PC-3 (cell line): ENCODE measurements at regions of chr4 and their contacts with region 1.

Region 1: GRCh38 chr4:177546745-177547144 is 104.5 kb upstream of the AGA start:
- DNase-seq: peak; percentile 21
- ATAC-seq: no peak
- H3K4me3 ChIP-seq: no peak overlapping the region
- H3K27ac ChIP-seq: no peak overlapping the region
- H3K4me1 ChIP-seq: no peaks in the 10 kb centered on the region
- H3K27me3 ChIP-seq: no peaks in the 10 kb centered on the region
- CTCF ChIP-seq: peak; percentile 38; the same call in 1 of the 2 replicates

Region 2: GRCh38 chr4:177064729-177065394 is 481.9 kb before region 1 on chr4:
- CTCF ChIA-PET with region 1: no interaction called
- POLR2A ChIA-PET with region 1: no interaction called
- intact Hi-C with region 1: no loop called
- DNase-seq: no peak
- ATAC-seq: no peak
- H3K4me3 ChIP-seq: no peak overlapping the region
- H3K27ac ChIP-seq: no peak overlapping the region
- H3K4me1 ChIP-seq: no peaks in the 10 kb centered on the region
- H3K27me3 ChIP-seq: no peaks in the 10 kb centered on the region
- CTCF ChIP-seq: no peak

Region 3: DNA sequence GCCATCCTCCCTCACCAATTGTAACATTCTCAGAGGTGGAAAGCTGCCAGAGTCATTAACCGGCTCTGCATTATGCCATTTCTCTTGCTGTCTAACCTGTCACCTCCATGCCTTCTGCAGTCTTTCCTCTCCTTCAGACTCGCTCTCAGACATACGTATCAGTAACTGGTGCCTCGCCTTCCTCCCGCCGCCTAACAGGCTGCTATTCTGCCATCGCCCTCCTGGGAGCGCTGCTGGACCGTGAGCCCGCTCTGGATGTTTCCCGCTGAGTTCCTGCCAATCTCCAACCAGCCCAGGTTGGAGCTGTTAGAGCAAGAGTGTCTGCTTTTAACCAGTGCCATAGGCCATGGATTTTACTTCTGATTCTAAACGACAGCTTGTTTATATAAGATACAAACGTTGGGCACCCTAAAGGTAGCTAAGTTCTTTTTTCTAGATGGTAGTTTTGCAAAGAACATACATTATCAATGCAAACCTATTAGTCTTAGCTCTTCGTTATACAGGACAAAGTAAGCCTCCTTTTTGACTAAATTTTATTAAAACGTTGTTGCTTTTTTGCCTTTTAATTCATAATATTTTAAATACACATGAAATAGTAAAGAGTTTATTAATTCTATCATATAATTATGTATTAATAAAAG is 296.6 kb before region 1 on chr4:
- CTCF ChIA-PET with region 1: no interaction called
- POLR2A ChIA-PET with region 1: no interaction called
- intact Hi-C with region 1: loop called (anchors 1 kb)
- DNase-seq: peak; percentile 69
- ATAC-seq: peak; percentile 88
- H3K4me3 ChIP-seq: no peak overlapping the region
- H3K27ac ChIP-seq: no peak overlapping the region
- H3K4me1 ChIP-seq: peaks cover 16% of the 10 kb centered on the region; the same call in 1 of the 2 replicates
- H3K27me3 ChIP-seq: no peaks in the 10 kb centered on the region
- CTCF ChIP-seq: peak; percentile 90

Region 4: GRCh38 chr4:177367336-177367735 is 179.4 kb before region 1 on chr4:
- CTCF ChIA-PET with region 1: no interaction called
- POLR2A ChIA-PET with region 1: no interaction called
- intact Hi-C with region 1: loop called (anchors 5 kb)
- DNase-seq: peak; percentile 26
- ATAC-seq: peak; percentile 81
- H3K4me3 ChIP-seq: no peak overlapping the region
- H3K27ac ChIP-seq: no peak overlapping the region
- H3K4me1 ChIP-seq: no peaks in the 10 kb centered on the region
- H3K27me3 ChIP-seq: no peaks in the 10 kb centered on the region
- CTCF ChIP-seq: peak; percentile 48; the same call in 1 of the 2 replicates

Region 5: DNA sequence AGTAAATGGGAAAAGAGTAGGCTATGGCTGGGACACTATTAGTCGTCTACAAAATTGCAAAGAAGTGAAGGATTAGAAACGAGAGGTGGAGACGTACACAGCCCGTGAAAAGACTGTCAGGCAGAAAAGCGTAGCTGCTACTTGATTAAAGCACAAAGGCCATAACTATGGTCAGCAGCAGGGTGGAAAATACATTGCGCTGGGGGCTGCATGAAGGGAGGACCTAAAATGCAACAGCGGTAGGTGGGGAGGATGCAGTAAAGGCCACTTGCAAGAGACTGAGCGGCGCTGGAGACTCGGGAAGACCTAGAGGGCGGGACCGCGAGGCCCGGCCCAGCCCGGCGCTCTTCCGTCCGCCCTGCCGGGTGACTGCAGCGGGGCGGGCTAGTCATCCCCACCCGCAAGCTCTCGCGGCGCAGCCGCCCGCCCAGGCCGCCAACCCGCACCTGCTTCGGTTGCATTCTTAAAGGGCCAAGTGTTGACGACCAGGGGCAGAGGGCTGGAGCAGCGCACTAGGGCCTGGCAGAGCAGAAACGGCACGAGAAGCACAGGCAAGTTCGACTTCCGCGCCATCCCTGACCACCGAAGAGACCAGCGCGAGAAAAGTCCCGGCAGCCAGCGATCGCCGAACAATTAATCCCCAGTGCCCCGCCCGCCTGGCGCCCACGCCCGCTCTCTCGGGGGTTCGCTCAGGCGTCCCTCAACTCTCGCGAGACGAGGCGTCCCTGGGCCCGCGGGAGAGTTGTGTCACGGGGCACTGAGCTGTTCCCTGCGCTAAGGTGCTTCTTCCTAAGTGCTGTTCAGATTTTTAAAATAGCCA is 104.7 kb before region 1 on chr4 and contains the start of gene AGA:
- CTCF ChIA-PET with region 1: no interaction called
- POLR2A ChIA-PET with region 1: no interaction called
- intact Hi-C with region 1: loop called (anchors 5 kb)
- DNase-seq: peak; percentile 89
- ATAC-seq: peak; percentile 97
- H3K4me3 ChIP-seq: peak within 1 kb of the TSS; percentile 88
- H3K27ac ChIP-seq: peak within 1 kb of the TSS; percentile 86
- H3K4me1 ChIP-seq: peaks cover 12% of the 10 kb centered on the region; the same call in 1 of the 2 replicates
- H3K27me3 ChIP-seq: no peaks in the 10 kb centered on the region
- CTCF ChIP-seq: no peak
- total RNA-seq, gene AGA: 21.5 and 42.1 TPM in 2 replicates

Region 6: GRCh38 chr4:177862541-177863176 is 315.9 kb after region 1 on chr4:
- CTCF ChIA-PET with region 1: no interaction called
- POLR2A ChIA-PET with region 1: no interaction called
- intact Hi-C with region 1: no loop called
- DNase-seq: no peak
- ATAC-seq: no peak
- H3K4me3 ChIP-seq: no peak overlapping the region
- H3K27ac ChIP-seq: no peak overlapping the region
- H3K4me1 ChIP-seq: peaks cover 18% of the 10 kb centered on the region
- H3K27me3 ChIP-seq: no peaks in the 10 kb centered on the region
- CTCF ChIP-seq: no peak